Activated CD4-positive, alpha-beta memory T cell treated with anti-CD3 and anti-CD28 coated beads, Interleukin-2, amount 10 ng/mL, durations not matched to agents 7 days and 5 days (primary cell): ENCODE measurements at regions of chr1 and their contacts with region 1.

Region 1: GRCh38 chr1:47241114-47242113 is 9.4 kb upstream of the TAL1 start:
- DNase-seq: no peak
- H3K4me3 Mint-ChIP-seq: no peak overlapping the region
- H3K27ac Mint-ChIP-seq: no peak overlapping the region
- H3K4me1 Mint-ChIP-seq: peaks cover 31% of the 10 kb centered on the region
- H3K27me3 Mint-ChIP-seq: peaks cover 26% of the 10 kb centered on the region

Region 2: GRCh38 chr1:47179017-47179987 is 62.1 kb before region 1 on chr1:
- CTCF ChIA-PET with region 1: interaction called, 13 read pairs
- POLR2A ChIA-PET with region 1: interaction called, 3 read pairs
- DNase-seq: peak; percentile 86
- H3K4me3 Mint-ChIP-seq: peak overlapping the region; percentile 74
- H3K27ac Mint-ChIP-seq: peak overlapping the region; percentile 41
- H3K4me1 Mint-ChIP-seq: peaks cover 8% of the 10 kb centered on the region
- H3K27me3 Mint-ChIP-seq: peaks cover 19% of the 10 kb centered on the region

Region 3: DNA sequence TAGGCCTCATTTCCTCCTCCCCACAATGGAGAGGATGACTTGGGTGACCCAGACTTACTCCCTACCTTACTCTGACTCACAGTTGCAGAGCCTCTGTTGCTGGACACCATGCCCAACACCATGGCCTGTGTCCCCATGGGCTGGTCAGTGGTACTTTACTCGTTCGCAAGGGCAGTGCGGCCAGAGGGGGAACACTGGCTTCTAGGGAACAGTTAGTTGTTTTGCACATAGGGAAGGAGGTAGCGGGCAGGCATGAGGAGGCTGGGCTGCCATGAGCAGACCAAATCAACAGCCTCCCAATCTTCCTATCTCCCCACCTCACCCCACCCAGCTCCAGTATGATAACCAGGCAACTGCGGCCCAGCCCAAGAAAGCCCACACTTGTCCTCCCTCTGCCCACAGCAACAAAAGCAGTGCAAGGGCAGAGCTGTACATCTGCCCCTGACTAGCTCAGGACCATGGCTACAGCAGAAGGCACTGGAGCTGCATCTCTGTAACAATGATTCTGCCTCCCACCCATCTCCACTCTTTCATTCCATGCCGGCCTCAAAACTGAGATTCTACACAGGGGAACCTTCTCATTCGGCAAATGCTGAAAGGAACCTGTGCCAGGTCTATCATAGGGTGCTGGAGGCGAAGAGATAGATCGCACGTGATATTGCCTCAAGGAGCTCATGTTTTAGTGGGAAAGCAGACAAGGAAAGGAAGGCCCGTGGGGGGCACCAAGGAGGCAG is 28.0 kb before region 1 on chr1:
- CTCF ChIA-PET with region 1: no interaction called
- POLR2A ChIA-PET with region 1: no interaction called
- DNase-seq: no peak
- H3K4me3 Mint-ChIP-seq: no peak overlapping the region
- H3K27ac Mint-ChIP-seq: no peak overlapping the region
- H3K4me1 Mint-ChIP-seq: peaks cover 14% of the 10 kb centered on the region
- H3K27me3 Mint-ChIP-seq: peaks cover 4% of the 10 kb centered on the region

Region 4: DNA sequence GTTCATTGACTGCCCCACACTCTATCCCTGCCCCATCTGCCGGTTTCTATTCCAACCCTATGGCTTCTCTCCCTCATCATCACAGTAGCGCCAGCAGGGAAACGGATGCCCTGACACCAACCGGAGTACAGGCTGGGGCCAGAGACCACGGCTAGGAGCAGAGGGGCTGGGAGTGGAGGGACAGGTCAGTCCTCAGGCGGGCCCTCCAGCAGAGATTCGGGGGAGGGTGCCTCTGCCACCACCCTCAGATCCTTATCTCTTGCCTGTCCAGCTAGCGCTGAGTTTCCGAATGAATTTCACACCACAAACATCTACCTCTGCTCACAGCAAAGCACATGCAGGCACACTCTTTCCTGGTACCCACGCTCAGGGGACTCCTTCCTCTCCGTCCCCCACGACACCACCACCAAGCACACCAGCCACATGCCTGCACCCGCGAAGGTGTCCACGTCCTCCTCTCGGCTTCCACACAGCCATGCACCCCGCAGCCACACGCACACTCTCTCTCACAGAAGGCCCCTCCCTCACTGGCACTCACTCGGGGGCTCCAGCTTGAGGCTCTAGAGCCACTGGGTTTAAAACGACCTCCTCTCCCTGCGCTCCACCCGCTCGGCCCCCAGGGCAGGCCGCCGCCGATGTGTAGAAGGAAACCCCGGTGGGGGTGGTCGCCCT is 16.6 kb before region 1 on chr1:
- CTCF ChIA-PET with region 1: no interaction called
- POLR2A ChIA-PET with region 1: no interaction called
- DNase-seq: no peak
- H3K4me3 Mint-ChIP-seq: no peak overlapping the region
- H3K27ac Mint-ChIP-seq: no peak overlapping the region
- H3K4me1 Mint-ChIP-seq: peaks cover 9% of the 10 kb centered on the region
- H3K27me3 Mint-ChIP-seq: peaks cover 43% of the 10 kb centered on the region

Region 5: GRCh38 chr1:47495176-47495713 is 253.8 kb after region 1 on chr1:
- CTCF ChIA-PET with region 1: no interaction called
- POLR2A ChIA-PET with region 1: no interaction called
- DNase-seq: no peak
- H3K4me3 Mint-ChIP-seq: no peak overlapping the region
- H3K27ac Mint-ChIP-seq: no peak overlapping the region
- H3K4me1 Mint-ChIP-seq: no peaks in the 10 kb centered on the region
- H3K27me3 Mint-ChIP-seq: peaks cover 21% of the 10 kb centered on the region